Sigmoid colon (tissue), 7 donors: ENCODE measurements at regions of chr11 and their contacts with region 1.

Region 1: GRCh38 chr11:122202951-122203456 is 87.0 kb upstream of the BLID start:
- DNase-seq: peak; percentile 89
- H3K4me3 ChIP-seq: peak overlapping the region; percentile 30 to 54 (median 47)
- H3K27ac ChIP-seq: peak overlapping the region; percentile 60 to 80 (median 66)
- H3K4me1 ChIP-seq: peaks cover 0 to 37% (median 19%) of the 10 kb centered on the region in 4 donors
- H3K27me3 ChIP-seq: no peaks in the 10 kb centered on the region
- CTCF ChIP-seq: peak; percentile 91 to 99 (median 92)
- EP300 ChIP-seq: no peak
- POLR2A ChIP-seq: no peak

Region 2: GRCh38 chr11:121741761-121742361 is 461.1 kb before region 1 on chr11:
- intact Hi-C with region 1: loop called (anchors 1 kb)
- DNase-seq: peak; percentile 94
- H3K4me3 ChIP-seq: peak overlapping the region in 1 of 4 donors; percentile 7
- H3K27ac ChIP-seq: peak overlapping the region; percentile 82 to 89 (median 86)
- H3K4me1 ChIP-seq: peaks cover 0 to 37% (median 32%) of the 10 kb centered on the region in 4 donors
- H3K27me3 ChIP-seq: no peaks in the 10 kb centered on the region
- CTCF ChIP-seq: no peak
- EP300 ChIP-seq: peak; percentile 57 to 94 (median 82)
- POLR2A ChIP-seq: no peak

Region 3: DNA sequence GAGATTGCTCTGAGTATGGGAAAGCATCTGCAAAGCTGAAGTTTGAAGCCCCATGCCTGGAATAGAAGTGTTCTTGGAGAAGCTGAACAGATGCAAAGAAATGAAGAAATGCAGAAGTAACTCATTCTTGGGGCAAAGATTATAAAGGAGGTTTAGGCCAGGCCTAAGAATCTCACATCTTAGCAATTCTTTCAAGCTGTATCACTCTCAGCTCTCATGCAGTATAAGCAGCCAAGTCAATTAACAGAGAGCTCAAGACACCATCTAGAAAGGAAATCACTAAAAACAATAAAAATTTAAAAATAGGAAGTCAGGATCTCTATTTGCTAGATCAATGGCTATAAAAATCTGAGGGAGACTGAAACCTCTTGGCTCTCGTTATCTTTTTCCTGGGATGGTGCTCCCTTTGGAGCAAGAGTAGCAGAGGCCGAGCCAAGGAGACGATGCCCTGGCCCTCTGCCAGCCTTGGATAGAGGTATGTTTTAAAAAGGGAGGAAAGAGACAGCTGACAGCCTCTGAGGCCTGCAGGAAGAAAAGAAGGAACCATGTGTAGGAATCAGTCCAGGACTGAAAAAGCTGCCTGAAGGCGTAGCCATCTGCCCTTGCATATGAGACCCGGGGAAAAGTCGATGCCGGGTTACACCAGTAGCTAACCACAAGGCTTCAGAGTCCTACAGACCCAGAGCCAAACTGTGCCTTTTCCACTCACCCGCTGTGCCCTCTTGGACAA is 316.8 kb before region 1 on chr11:
- intact Hi-C with region 1: loop called (anchors 10 kb)
- DNase-seq: peak; percentile 84
- H3K4me3 ChIP-seq: no peak overlapping the region
- H3K27ac ChIP-seq: peak overlapping the region in 3 of 4 donors; percentile 10 to 51 (median 14)
- H3K4me1 ChIP-seq: peaks cover 0 to 24% (median 19%) of the 10 kb centered on the region in 4 donors
- H3K27me3 ChIP-seq: no peaks in the 10 kb centered on the region
- CTCF ChIP-seq: no peak
- EP300 ChIP-seq: no peak
- POLR2A ChIP-seq: no peak

Region 4: DNA sequence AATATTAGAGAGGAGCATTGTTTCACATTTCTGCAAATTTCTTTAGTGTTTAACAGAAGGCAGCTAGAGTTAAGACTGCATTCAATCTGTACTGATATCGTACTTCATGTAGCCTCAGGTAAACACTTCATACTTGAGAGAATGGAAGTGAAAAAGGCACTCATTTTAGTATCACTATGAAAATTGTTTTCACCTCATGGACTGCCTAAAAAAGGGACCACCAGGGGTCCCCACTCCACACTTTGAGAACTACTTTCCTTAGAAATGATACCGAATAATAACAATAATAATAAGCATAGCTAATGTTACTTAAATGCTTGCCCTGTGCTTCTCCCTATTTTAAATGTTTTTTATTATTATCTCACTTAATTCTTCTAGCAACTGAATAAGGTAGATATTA is 182.1 kb before region 1 on chr11:
- intact Hi-C with region 1: loop called (anchors 5 kb)
- DNase-seq: no peak
- H3K4me3 ChIP-seq: no peak overlapping the region
- H3K27ac ChIP-seq: no peak overlapping the region
- H3K4me1 ChIP-seq: no peaks in the 10 kb centered on the region
- H3K27me3 ChIP-seq: no peaks in the 10 kb centered on the region
- CTCF ChIP-seq: peak in 2 of 4 experiments; percentile 29 to 49
- EP300 ChIP-seq: no peak
- POLR2A ChIP-seq: no peak

Region 5: GRCh38 chr11:122159173-122159721 is 43.8 kb before region 1 on chr11:
- intact Hi-C with region 1: loop called (anchors 5 kb)
- DNase-seq: peak; percentile 64
- H3K4me3 ChIP-seq: peak overlapping the region; percentile 8 to 50 (median 32)
- H3K27ac ChIP-seq: peak overlapping the region; percentile 77 to 86 (median 84)
- H3K4me1 ChIP-seq: peaks cover 0 to 48% (median 31%) of the 10 kb centered on the region in 4 donors
- H3K27me3 ChIP-seq: no peaks in the 10 kb centered on the region
- CTCF ChIP-seq: no peak
- EP300 ChIP-seq: no peak
- POLR2A ChIP-seq: no peak

Region 6: DNA sequence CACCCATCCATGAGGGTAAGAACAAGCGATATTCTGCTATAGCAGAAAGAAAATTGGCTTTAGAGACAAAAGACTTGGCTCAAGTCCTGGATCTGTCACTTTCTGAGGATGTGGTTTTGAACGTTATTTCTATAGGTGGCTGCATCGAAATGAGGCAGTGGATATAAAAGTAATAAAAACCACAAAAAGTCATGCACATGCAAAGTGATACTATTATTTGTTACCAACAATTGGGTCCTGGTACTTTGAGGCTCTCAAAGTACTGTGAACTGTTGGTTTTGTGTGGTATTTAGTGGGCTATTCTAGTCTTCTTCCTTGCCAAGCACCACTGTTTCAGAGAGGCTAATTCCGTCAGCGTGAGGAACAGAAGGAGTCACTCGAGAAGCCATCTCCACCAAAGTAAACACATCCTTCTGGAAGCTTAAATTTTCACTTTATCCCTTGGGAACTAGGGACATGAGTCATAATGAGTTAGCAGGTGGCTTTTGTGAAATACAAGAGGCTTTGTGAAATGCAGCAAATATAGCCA is 465.6 kb after region 1 on chr11:
- intact Hi-C with region 1: no loop called
- DNase-seq: no peak
- H3K4me3 ChIP-seq: no peak overlapping the region
- H3K27ac ChIP-seq: peak overlapping the region in 1 of 4 donors; percentile 72
- H3K4me1 ChIP-seq: peaks cover 0 to 18% (median 6%) of the 10 kb centered on the region in 4 donors
- H3K27me3 ChIP-seq: no peaks in the 10 kb centered on the region
- CTCF ChIP-seq: no peak
- EP300 ChIP-seq: no peak
- POLR2A ChIP-seq: no peak